ENCODE measurements at regions of chr17 and their contacts with region 1.

Region 1: DNA sequence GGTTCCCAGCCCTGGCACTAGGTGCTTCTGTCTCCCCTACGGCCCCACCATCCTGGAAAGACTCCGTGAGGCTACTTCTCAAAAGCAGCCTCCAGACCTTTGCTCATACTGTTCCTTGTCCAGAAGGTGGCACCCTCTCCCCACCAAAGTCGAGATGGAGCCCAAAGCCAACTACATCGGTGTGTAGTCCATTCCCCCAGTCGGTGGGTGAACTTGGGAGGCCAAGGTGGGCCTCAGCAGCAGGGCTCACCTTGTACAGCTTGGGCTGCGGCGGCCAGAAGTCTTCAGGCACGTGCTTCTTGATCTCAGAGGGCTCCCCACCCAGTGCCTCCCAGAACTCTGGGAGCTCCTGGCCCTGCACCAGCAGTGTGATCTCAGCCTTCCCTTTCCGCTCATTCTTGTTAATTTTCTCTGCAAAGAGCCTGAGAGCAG is 10.2 kb downstream of the FLII start:
- DNase-seq: peak; percentile 74
- H3K4me3 ChIP-seq: no peak overlapping the region
- H3K27ac ChIP-seq: no peak overlapping the region
- H3K4me1 ChIP-seq: no peaks in the 10 kb centered on the region
- H3K27me3 ChIP-seq: no peaks in the 10 kb centered on the region
- CTCF ChIP-seq: peak; percentile 69

Region 2: DNA sequence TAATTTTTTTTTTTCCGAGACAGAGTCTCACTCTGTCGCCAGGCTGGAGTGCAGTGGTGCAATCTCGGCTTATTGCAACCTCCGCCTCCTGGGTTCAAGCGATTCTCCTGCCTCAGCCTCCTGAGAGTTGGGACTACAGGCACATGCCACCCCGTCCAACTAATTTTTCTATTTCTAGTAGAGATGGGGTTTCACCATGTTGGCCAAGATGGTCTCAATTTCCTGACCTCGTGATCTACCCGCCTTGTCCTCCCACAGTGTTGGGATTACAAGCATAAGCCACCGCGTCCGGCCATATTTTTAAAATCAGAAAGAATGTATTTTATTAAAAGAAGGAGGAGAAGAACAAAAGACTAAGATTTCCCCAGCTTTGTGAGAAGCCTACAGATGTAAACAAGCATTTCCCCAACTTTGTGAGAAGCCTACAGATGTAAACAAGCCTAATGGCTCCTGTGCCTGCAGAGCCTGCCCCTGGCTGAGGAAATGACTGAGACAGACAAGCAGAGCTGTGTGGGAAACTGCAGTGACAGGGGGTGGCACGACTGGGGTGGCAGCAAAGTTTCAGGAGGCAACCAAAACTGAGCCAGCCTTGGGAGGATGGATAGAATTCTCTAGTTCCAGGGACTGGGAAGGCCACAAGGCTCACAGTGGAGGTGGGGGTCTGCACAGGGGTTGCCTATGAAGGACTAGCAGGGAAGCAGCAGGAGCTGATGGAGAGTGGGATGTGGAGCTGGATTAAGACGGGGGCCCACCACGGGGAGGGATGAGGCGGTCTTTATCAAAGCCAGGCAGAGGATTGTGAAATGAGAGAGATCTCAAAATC is 43.6 kb after region 1 on chr17:
- intact Hi-C with region 1: no loop called
- DNase-seq: no peak
- H3K4me3 ChIP-seq: no peak overlapping the region
- H3K27ac ChIP-seq: no peak overlapping the region
- H3K4me1 ChIP-seq: no peaks in the 10 kb centered on the region
- H3K27me3 ChIP-seq: no peaks in the 10 kb centered on the region
- CTCF ChIP-seq: no peak

Region 3: DNA sequence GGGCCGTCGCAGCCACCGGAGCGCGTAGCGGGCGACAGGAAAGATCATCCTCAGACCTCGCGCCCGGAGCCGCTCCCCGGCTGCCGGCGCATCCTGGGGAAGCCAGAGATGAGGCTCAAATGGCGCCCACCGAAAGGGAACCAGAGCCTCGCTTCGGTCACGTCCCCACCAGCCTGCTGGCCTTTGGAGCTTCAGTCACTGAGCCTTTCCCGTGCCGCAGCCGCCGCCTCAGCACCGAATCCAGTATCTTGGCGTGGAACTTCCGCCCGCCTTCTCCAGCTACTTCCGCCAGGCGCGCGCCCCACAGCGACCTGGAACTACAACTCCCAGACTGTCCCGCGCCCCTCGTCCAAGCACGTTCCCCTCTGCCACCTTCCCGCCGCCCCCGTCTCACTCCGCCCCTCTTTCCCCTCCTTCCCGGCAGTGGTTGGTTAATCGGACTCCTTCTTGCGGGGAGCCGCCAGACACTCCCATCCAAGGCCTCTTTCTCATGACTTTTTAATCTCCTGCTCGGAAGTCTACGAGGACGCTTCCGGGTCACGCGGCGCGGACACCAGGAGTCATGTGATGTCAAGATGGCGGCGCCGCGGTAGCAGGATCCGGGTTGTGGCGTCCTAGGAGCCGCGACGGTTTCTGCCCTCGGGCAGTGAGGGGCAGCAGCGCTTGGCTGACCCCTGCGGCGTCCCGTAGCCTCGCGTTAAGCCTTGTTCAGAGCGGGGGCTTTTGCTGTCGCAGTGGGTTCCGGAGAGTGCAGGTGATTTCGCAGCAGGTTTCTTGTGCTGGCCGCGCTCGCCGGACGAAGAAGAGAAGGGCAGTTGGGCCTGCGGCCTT is 66.6 kb after region 1 on chr17 and contains the starts of genes SMCR8 and TOP3A:
- intact Hi-C with region 1: loop called (anchors 5 kb)
- DNase-seq: peak; percentile 99
- H3K4me3 ChIP-seq: peak within 1 kb of the TSS; percentile 89
- H3K27ac ChIP-seq: peak within 1 kb of the TSS; percentile 89
- H3K4me1 ChIP-seq: peaks cover 48% of the 10 kb centered on the region
- H3K27me3 ChIP-seq: no peaks in the 10 kb centered on the region
- CTCF ChIP-seq: no peak
- total RNA-seq, gene SMCR8: 20.5 to 21.4 TPM
- total RNA-seq, gene TOP3A: 27.2 to 45.4 TPM